Posterior cingulate gyrus (tissue), 11 donors: ENCODE measurements at regions of chr2 and their contacts with region 1.

Region 1: DNA sequence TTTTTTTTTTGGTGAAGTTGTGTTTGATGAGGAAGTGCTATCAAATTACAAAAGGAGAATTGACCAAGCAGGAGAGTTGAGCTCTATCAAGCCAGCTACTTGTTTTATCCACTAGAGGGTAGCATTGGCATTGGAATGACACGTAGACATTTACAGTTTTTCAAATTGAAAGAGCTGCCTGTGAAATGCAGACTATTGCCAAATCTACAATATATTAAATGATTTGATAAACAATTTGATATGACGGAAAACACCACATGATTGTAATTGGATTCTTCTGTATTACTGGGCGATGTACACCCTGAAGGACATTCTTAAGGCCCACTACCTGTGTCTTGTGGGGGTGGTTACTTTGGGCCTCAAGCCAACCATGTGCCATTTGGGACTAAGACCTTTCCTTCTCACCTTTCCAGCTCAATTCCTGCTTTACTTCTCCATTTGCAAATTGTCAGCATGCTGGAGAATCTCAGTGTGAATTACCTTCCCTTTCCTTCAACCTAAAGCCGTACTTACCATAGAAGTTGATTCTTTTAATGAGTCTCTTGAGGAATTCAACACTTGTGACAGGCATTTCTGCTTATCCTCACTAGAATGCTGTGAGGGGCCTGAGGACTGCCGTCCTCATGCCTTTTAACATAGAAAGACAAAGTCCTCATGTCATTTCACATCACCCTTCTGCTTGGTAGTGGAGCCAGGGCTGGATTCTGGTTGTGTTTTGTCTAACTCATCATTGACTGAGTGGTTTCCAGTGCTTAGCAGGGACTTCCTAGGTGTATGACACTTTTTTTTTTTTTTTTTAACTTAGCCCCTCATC is 134.8 kb upstream of the THUMPD2 start:
- DNase-seq: no peak

Region 2: DNA sequence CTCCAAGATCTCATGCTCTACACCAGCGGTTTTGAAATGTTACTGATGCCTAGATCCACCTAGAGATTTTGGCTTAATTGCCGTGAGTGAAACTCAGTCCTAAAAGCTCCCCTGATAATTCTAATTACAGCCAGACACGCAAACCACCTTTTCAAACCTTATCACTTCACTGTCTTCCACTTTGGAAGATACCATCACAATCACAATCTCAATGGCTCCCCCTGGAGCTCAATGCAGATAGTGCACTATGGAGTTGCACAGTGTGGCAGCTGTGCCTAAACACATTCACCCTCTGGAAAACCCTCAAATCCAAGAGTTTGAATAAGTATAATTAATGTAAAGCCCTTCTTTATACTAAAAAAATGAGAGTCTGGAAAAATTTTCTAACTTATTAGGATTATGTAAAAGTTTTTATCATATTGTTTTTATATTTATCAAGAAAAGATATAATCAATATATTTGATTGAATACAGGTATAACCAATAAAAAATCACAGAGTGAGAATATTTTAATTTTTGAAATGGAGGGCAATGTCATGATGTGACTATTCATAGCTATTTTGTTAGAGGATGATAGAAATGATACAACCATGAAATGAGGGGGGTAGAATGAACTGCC is 640.9 kb after region 1 on chr2:
- intact Hi-C with region 1: loop called (anchors 5 kb)
- DNase-seq: peak in 6 of 10 donors; percentile 6 to 63 (median 52)

Region 3: GRCh38 chr2:41782306-41783158 is 1868.7 kb after region 1 on chr2:
- intact Hi-C with region 1: loop called (anchors 1 kb)
- DNase-seq: peak in 1 of 10 donors; percentile 80